ENCODE measurements at regions of chr12 and their contacts with region 1.

Region 1: DNA sequence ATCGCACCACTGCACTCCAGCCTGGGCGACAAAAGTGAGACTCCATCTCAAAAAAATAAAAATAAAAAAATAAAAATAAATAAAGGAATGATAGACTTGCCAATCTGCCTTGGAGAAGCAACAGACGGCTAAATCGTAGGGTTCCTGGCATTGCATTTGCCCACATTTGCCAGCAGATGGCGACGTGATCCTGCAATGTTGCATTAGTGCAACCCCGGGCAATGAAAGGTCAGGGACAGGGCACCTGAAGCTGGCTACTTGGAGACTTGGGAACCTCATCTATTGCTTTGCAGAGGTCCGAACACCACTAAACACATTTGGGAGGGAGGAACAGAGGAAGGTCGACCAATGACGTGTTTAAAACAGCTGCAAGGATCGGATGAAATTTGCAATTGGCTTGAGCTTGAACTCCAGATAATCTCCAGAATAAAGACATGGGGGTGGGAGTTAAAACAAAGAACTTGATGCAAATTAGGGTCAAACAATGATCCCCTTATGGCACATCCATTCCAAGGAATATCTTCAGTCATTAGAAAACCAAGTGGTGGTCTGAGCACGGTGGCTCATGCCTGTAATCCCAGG is 34.6 kb downstream of the SPRING1 start:
- DNase-seq: peak in 9 of 10 donors; percentile 49 to 95 (median 78)

Region 2: GRCh38 chr12:116135209-116135930 is 567.9 kb before region 1 on chr12:
- intact Hi-C with region 1: loop called (anchors 10 kb)
- DNase-seq: no peak

Region 3: DNA sequence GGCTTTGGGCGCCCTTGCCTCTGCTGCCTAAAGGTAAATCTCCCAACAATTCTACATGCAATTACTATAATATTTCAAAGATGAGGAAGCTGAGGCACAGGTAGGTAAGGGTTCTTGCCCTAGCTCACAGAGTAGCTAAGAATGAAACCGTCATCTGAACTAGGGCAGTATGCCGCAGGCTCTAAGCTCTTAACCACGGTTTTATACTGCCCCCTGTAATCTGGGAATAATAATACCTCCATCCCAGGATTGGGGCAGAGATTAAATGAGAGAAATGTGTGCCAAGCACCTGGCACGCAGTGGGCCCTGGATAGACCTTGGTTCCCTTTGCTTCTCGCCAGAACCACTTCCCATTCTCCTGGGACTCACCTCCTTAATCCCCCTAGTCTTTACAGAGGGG is 179.4 kb after region 1 on chr12:
- intact Hi-C with region 1: loop called (anchors 2 kb)
- DNase-seq: peak in 1 of 10 donors; percentile 55

Region 4: GRCh38 chr12:118189741-118190191 is 1486.5 kb after region 1 on chr12:
- intact Hi-C with region 1: no loop called
- DNase-seq: peak; percentile 40 to 93 (median 58)

Measured in posterior cingulate gyrus (tissue), 11 donors.